ENCODE measurements at regions of chr11 and their contacts with region 1.

Region 1: GRCh38 chr11:18171377-18172000 is 1.1 kb upstream of the MRGPRX4 start:
- DNase-seq: peak; percentile 56
- H3K4me3 ChIP-seq: no peak overlapping the region
- H3K27ac ChIP-seq: no peak overlapping the region
- H3K4me1 ChIP-seq: no peaks in the 10 kb centered on the region
- CTCF ChIP-seq: peak; percentile 79

Region 2: DNA sequence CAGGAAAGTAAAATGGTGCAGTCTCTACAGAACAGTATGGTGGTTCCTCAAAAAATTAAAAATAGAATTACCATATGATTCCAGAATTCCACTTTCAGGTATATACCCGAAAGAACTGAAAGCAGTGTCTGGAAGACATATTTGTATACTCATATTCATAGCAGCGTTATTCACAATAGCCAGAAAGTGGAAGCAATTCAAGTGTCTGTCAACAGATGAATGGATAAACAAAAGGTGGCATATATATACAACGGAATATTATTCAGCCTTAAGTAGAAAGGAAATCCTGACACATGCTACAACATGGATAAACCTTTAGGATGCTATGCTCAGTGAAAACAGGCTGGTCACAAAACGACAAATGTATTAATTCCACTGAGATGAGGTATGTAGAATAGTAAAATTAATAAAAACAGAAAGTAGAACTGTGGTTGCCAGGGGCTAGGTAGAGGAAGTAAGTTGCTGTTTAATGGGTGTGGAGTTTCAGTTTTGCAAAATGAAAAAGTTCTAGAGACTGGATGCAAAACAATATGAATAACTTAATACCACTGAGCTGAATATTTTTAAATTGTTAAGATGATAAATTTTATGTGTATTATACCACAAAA is 109.1 kb after region 1 on chr11:
- CTCF ChIA-PET with region 1: no interaction called
- POLR2A ChIA-PET with region 1: no interaction called
- intact Hi-C with region 1: loop called (anchors 10 kb)
- DNase-seq: no peak
- H3K4me3 ChIP-seq: no peak overlapping the region
- H3K27ac ChIP-seq: no peak overlapping the region
- H3K4me1 ChIP-seq: peaks cover 5% of the 10 kb centered on the region
- CTCF ChIP-seq: no peak